ENCODE measurements at regions of chr10 and their contacts with region 1.

Region 1: DNA sequence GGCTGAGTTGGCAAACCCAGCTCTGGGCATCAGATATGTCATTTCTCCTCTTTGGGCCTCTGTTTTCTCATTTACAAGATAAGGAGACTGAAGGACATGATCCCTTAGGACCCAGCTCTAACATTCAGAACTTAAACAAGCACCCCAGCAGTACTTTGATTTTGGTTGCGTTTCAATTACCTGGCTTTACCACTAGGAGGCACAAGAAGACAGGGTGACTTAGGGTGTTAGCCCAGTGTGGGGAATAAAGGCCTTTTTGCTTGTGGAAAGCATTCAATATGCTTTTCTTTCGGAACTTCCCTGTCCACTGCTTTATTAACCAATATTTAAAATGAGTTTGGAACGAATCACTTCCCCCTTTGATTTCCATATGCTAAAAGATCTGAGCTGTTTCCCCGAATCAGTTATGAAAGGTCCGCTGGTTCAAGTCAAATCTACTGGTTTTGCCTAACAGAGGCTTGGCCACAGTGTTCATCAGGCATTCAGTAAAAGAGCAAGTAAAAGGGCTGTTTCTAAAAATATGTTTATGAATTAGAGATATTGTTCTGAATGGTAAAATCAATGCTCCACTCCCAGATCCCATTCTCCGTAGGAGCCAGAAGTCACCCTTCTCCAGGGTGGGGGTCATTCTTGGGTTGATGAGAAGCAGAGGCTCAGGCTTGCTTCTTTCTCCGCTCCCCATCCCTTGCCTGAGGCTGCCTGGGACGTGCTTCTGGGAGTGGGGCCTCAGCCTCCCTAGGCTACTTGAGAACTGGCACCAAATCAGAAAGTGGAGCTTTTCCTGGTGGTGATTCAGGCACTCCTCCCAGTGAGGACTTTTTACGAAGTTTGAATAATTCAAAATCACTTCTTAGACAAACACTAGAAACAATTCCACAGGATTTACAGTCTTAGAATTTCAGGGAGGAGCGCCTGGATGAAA is 105.5 kb downstream of the MYOF start:
- DNase-seq: peak; percentile 45 to 74 (median 54)
- ATAC-seq: peak; percentile 91 to 92
- H3K4me3 ChIP-seq: no peak overlapping the region
- H3K27ac ChIP-seq: peak overlapping the region; percentile 75
- H3K4me1 ChIP-seq: no peaks in the 10 kb centered on the region
- H3K27me3 ChIP-seq: no peaks in the 10 kb centered on the region

Region 2: DNA sequence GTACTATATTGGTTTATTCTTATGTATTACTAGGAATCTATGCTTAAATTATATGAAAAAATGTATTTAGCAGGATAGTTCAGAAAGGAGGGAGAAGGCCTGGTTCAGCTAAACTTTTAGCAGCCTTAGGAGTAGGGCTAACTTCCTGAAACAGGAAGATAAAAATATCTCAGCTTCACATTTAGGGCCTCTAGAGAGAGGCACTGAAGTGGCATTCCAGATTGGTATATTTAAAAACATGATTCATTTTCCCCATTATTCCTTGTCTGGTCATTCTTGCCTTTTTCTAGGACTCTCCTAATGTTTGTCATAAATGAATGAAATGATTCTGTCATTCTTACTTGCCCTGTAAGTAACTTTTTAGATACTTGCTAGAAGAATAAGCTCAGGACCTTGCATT is 379.0 kb before region 1 on chr10:
- intact Hi-C with region 1: no loop called
- DNase-seq: no peak
- ATAC-seq: no peak
- H3K4me3 ChIP-seq: no peak overlapping the region
- H3K27ac ChIP-seq: no peak overlapping the region
- H3K4me1 ChIP-seq: no peaks in the 10 kb centered on the region
- H3K27me3 ChIP-seq: no peaks in the 10 kb centered on the region

Region 3: DNA sequence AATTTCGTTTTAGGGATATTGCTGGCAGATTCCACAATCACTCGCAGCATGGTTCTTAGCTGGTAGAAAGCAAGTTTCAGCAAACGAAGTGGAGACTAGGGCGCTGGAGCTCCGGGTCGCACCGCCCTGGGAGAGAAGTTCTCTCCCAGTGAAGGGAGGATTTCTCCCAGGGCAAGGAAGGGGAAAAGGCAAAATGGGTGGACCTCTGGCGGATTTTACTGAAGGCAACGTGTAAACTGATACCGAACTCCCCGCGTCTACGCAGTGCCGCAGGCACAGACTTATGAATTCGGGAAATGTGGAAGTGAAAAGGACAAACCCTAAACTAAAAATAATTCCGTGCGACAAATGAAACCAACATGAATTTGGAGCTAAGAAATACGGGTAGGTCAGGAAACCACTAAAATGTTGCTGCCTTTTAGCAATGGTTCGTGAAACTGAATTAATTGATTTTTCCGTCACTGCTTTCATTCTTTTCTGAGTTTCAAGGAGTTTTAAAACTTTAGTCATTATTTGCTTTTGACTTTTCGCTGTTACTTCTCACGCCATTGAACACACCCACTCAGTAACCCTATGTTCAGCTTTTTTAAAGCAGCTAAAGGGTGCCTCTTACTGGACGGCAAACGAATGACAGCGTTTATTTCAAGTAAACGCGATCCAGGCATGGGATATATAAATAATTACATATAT is 105.7 kb after region 1 on chr10 and contains the start of gene MYOF:
- intact Hi-C with region 1: loop called (anchors 1 to 5 kb)
- DNase-seq: peak; percentile 61 to 80 (median 70)
- ATAC-seq: peak; percentile 89 to 90
- H3K4me3 ChIP-seq: peak within 1 kb of the TSS; percentile 98
- H3K27ac ChIP-seq: peak within 1 kb of the TSS; percentile 86
- H3K4me1 ChIP-seq: no peaks in the 10 kb centered on the region
- H3K27me3 ChIP-seq: no peaks in the 10 kb centered on the region
- total RNA-seq, gene MYOF: 13.6 to 25.0 (median 16.2) TPM